IMR-90 (cell line): ENCODE measurements at regions of chr10 and their contacts with region 1.

Region 1: DNA sequence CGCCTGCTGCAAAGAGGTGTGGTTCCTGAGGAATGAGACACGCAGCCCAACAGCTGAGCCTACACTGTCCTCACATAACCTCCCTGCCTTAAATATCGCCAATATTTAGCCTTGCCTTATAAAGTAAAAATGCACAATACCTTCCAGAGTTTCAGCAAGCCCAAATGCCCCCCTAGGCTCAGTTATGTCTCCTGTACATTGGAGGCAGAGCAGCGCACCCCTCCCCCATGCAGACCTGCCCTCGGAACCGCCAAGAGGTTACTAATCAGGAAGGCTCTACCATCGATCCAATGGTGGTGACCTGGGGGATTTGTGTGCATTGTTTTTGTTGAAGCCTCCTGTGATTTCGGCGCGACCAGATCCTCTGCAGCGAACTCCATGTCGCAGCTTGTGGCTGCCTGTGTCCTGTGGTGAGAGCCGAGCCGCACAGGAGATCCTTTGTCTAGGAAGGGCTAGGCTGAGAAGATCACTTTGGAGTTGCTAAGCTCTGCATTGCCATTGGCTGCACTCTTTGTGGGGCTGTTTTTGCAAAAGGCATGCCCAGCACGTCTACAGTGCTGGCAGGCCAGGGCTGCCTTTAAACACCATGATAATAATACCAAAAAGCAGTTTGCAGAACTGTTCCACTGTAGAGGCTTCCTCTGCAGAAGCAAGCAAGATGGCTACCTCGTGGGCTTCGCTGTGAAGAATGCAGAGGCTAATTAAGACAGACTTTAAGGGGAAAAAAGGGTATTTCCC is 40.1 kb downstream of the TET1 start:
- DNase-seq: peak; percentile 87
- ATAC-seq: peak; percentile 92
- H3K4me3 ChIP-seq: peak overlapping the region; percentile 42
- H3K27ac ChIP-seq: peak overlapping the region; percentile 92
- H3K4me1 ChIP-seq: peaks cover 12% of the 10 kb centered on the region
- H3K27me3 ChIP-seq: no peaks in the 10 kb centered on the region
- CTCF ChIP-seq: no peak
- POLR2A ChIP-seq: no peak
- RAD21 ChIP-seq: peak; percentile 11; the same call in 1 of the 2 replicates

Region 2: DNA sequence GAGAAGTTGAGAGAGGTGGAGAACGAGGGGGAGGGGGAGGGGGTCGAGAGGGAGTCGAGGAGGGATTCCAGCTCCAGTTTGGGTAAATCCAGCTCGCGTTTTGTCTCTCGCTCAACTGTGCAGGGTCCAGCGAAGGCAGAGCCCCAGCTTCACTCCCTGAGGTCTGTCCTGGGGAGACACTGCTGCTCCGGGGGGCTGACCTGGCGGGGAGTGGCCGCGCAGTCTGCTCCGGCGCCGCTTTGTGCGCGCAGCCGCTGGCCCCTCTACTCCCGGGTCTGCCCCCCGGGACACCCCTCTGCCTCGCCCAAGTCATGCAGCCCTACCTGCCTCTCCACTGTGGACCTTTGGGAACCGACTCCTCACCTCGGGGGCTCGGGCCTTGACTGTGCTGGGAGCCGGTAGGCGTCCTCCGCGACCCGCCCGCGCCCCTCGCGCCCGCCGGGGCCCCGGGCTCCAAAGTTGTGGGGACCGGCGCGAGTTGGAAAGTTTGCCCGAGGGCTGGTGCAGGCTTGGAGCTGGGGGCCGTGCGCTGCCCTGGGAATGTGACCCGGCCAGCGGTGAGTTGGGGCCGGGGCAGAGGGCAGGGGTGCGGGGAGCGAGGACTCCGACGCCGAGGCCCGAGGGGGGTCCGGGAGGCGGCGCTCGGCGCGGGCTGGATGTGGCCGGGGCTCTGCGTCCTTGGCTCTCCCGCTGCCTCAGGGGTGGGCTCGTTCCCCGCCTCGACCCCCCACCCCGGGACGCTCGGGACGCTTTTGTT is 39.8 kb before region 1 on chr10 and contains the start of gene TET1:
- CTCF ChIA-PET with region 1: interaction called, 7 read pairs
- POLR2A ChIA-PET with region 1: interaction called, 6 read pairs
- dilution Hi-C with region 1: no loop called
- in situ Hi-C with region 1: no loop called
- intact Hi-C with region 1: loop called (anchors 1 kb)
- DNase-seq: peak; percentile 59
- ATAC-seq: peak; percentile 67
- H3K4me3 ChIP-seq: peak within 1 kb of the TSS; percentile 96
- H3K27ac ChIP-seq: peak within 1 kb of the TSS; percentile 82
- H3K4me1 ChIP-seq: peaks cover 1% of the 10 kb centered on the region; the same call in 1 of the 2 replicates
- H3K27me3 ChIP-seq: no peaks in the 10 kb centered on the region
- CTCF ChIP-seq: no peak
- POLR2A ChIP-seq: peak; percentile 29; the same call in 1 of the 2 replicates
- RAD21 ChIP-seq: no peak
- total RNA-seq, gene TET1: 4.3 and 5.6 TPM in 2 replicates

Region 3: GRCh38 chr10:68636335-68636734 is 36.1 kb after region 1 on chr10:
- CTCF ChIA-PET with region 1: no interaction called
- POLR2A ChIA-PET with region 1: interaction called, 3 read pairs
- dilution Hi-C with region 1: no loop called
- in situ Hi-C with region 1: no loop called
- intact Hi-C with region 1: loop called (anchors 5 kb)
- DNase-seq: no peak
- ATAC-seq: no peak
- H3K4me3 ChIP-seq: no peak overlapping the region
- H3K27ac ChIP-seq: no peak overlapping the region
- H3K4me1 ChIP-seq: peaks cover 5% of the 10 kb centered on the region
- H3K27me3 ChIP-seq: no peaks in the 10 kb centered on the region
- CTCF ChIP-seq: no peak
- POLR2A ChIP-seq: no peak
- RAD21 ChIP-seq: no peak

Region 4: DNA sequence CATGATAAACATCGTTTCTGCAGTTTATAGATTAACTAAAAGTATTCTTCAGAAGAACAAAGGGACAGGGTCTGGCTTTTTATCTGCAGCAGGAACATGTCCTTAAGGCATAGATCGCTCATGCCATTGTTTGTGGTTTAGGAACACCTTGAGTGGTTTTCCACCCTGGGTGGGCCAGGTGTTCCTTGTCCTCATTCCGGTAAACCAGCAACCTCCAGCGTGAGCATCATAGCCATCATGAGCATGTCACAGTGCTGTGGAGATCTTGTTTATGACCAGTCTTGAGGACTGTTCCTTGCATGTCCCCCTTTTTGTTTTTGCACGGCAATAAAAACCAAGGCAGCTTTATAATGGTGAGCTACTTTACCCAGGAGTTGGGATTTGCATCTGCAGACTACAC is 261.0 kb after region 1 on chr10:
- CTCF ChIA-PET with region 1: no interaction called
- POLR2A ChIA-PET with region 1: no interaction called
- dilution Hi-C with region 1: no loop called
- in situ Hi-C with region 1: no loop called
- intact Hi-C with region 1: no loop called
- DNase-seq: no peak
- ATAC-seq: no peak
- H3K4me3 ChIP-seq: no peak overlapping the region
- H3K27ac ChIP-seq: no peak overlapping the region
- H3K4me1 ChIP-seq: no peaks in the 10 kb centered on the region
- H3K27me3 ChIP-seq: peaks cover 23% of the 10 kb centered on the region
- CTCF ChIP-seq: no peak
- POLR2A ChIP-seq: no peak
- RAD21 ChIP-seq: no peak